MCF 10A (cell line): ENCODE measurements at regions of chr3 and their contacts with region 1.

Region 1: DNA sequence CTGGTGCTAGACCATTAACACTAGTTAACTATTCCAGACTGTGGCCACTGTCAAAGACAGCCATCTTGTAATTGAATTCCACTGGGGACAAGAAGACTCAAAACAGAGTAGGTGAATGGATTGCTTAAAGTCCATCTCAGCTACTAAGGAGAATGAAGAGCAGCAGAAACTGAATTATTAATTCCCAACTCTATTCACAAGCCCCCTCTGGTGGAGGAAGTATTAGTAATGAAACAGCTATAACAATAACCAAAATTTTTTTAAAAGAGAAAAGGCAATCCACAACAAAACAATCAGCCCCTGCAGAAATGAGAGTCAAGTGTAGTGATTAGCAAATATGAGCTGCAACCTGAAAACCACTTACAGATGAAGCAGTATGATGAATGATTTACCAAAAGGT is 302.8 kb downstream of the FHIT start:
- DNase-seq: peak; percentile 34
- H3K4me3 Mint-ChIP-seq: no peak overlapping the region
- H3K27ac Mint-ChIP-seq: no peak overlapping the region
- H3K4me1 Mint-ChIP-seq: peaks cover 3% of the 10 kb centered on the region
- H3K27me3 Mint-ChIP-seq: no peaks in the 10 kb centered on the region
- CTCF ChIP-seq: peak; percentile 24

Region 2: DNA sequence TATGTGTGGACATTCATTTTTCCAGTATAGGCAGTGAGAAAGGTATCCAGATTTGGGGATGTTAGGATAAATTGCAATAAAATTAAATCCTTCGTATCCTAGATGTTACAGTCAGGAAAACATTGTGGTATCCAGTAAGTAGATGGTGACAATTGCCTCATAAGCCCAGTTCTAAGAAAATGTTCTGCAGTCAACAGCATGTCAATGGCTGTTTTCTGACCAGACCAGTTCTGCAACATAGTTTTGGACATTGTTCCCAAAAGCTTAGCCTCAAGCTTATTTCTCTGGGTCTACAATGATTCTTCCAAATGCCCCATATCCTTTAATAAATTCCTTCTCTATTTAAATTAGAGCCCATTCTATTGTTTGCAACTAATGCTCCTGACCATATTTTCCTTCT is 178.0 kb before region 1 on chr3:
- CTCF ChIA-PET with region 1: no interaction called
- POLR2A ChIA-PET with region 1: no interaction called
- intact Hi-C with region 1: loop called (anchors 10 kb)
- DNase-seq: no peak
- H3K4me3 Mint-ChIP-seq: no peak overlapping the region
- H3K27ac Mint-ChIP-seq: no peak overlapping the region
- H3K4me1 Mint-ChIP-seq: peaks cover 21% of the 10 kb centered on the region
- H3K27me3 Mint-ChIP-seq: no peaks in the 10 kb centered on the region
- CTCF ChIP-seq: no peak

Region 3: GRCh38 chr3:60935709-60936108 is 12.8 kb before region 1 on chr3:
- CTCF ChIA-PET with region 1: interaction called, 10 read pairs
- POLR2A ChIA-PET with region 1: no interaction called
- intact Hi-C with region 1: no loop called
- DNase-seq: peak; percentile 61
- H3K4me3 Mint-ChIP-seq: no peak overlapping the region
- H3K27ac Mint-ChIP-seq: peak overlapping the region; percentile 5
- H3K4me1 Mint-ChIP-seq: peaks cover 6% of the 10 kb centered on the region
- H3K27me3 Mint-ChIP-seq: no peaks in the 10 kb centered on the region
- CTCF ChIP-seq: no peak

Region 4: GRCh38 chr3:61420136-61420759 is 471.8 kb after region 1 on chr3:
- CTCF ChIA-PET with region 1: no interaction called
- POLR2A ChIA-PET with region 1: no interaction called
- intact Hi-C with region 1: no loop called
- DNase-seq: no peak
- H3K4me3 Mint-ChIP-seq: no peak overlapping the region
- H3K27ac Mint-ChIP-seq: no peak overlapping the region
- H3K4me1 Mint-ChIP-seq: peaks cover 24% of the 10 kb centered on the region
- H3K27me3 Mint-ChIP-seq: no peaks in the 10 kb centered on the region
- CTCF ChIP-seq: no peak